ENCODE measurements at regions of chr7 and their contacts with region 1.

Region 1: GRCh38 chr7:99040104-99040958 is 103.6 kb downstream of the SMURF1 start:
- DNase-seq: peak; percentile 68 to 96 (median 86)

Region 2: DNA sequence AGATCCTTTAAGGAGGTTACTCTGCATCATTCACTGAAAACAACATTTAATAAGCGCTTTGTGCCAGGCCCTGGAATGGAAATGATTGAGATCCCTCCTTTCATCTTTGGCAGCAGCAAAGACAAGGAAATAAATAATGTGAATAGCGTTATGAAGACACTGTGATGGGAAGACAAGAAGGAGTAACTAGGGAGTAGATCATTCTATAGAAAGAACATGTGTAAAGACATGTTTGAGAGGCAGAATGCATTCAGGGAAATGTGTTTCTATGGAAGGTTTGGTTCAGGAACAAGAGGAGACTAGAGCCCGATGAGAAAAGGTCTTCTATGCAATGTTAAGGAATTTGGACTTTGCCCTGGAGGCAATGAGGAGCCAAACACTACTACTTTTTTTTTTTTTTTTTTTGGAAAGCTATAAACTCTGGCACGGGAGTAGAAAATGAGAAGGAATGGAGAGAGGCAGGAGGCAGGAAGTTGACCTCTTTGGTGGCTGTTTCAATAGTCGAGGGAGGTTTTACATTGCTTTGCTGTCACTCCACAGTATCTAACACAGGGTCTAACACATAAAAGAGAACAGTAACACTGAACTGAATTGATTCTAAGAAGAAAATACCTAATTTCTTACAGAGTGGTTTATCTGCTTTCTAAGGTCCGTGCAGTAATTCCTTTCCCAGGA is 58.6 kb after region 1 on chr7:
- intact Hi-C with region 1: no loop called
- DNase-seq: no peak

Region 3: GRCh38 chr7:99312316-99313203 is 272.2 kb after region 1 on chr7:
- intact Hi-C with region 1: loop called (anchors 2 kb)
- DNase-seq: peak in 41 of 42 donors; percentile 52 to 92 (median 82)

Measured in head of caudate nucleus (tissue), 42 donors.